ENCODE measurements at regions of chr1 and their contacts with region 1.

Region 1: DNA sequence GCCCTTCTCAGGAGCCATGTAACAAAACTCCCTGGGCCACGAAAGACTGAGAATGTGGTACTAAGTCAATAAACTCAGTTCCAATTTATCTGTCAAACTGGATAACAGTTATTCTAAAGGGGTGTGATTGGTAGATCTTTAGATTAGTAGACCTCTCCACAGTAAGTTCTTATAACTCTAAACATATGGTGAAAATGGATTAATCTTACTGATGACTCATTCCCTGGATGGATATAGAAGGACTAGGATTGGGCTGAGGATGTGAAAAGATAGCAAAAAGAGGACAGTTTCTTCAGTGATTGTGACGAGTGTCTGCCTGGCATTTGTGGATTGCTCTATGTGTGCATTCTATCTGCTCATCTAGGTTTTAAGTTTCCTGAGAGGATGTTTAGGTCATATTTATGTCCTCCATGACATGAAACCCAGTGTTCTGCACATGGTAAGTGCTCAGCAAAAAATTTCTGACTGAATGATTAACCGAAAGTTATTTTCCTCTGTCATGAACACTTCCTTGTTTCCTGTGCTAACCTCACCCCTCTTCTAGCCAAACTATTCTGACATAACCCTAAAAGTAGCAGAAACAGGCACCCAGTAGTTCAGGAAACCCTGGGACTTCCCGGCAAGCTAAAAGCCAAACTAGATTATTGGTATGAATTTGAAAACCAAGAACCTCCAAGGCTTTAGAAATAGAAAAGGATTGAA is 397.5 kb upstream of the PLXNA2 start:
- ATAC-seq: no peak
- H3K4me3 ChIP-seq: no peak overlapping the region
- H3K27ac ChIP-seq: no peak overlapping the region
- H3K4me1 ChIP-seq: peaks cover 7 to 11% of the 10 kb centered on the region in 2 donors

Region 2: GRCh38 chr1:208757846-208758245 is 116.1 kb after region 1 on chr1:
- in situ Hi-C with region 1: no loop called
- ATAC-seq: peak in 3 of 8 experiments; percentile 60 to 91 (median 88)
- H3K4me3 ChIP-seq: no peak overlapping the region
- H3K27ac ChIP-seq: no peak overlapping the region
- H3K4me1 ChIP-seq: peaks cover 0 to 11% of the 10 kb centered on the region in 2 donors

Region 3: GRCh38 chr1:209029737-209030136 is 388.0 kb after region 1 on chr1:
- in situ Hi-C with region 1: loop called in 1 of 9 experiments (anchors 25 kb)
- ATAC-seq: peak in 3 of 8 experiments; percentile 28 to 74 (median 55)
- H3K4me3 ChIP-seq: no peak overlapping the region
- H3K27ac ChIP-seq: no peak overlapping the region
- H3K4me1 ChIP-seq: peaks cover 0 to 3% of the 10 kb centered on the region in 2 donors

Measured in motor neuron (in vitro differentiated cells).